PC-9 (cell line): ENCODE measurements at regions of chr16 and their contacts with region 1.

Region 1: GRCh38 chr16:74438492-74439041 is 17.3 kb upstream of the CLEC18B start:
- DNase-seq: no peak
- H3K4me3 ChIP-seq: no peak overlapping the region
- H3K27ac ChIP-seq: no peak overlapping the region
- H3K4me1 ChIP-seq: no peaks in the 10 kb centered on the region
- H3K27me3 ChIP-seq: no peaks in the 10 kb centered on the region
- CTCF ChIP-seq: no peak

Region 2: DNA sequence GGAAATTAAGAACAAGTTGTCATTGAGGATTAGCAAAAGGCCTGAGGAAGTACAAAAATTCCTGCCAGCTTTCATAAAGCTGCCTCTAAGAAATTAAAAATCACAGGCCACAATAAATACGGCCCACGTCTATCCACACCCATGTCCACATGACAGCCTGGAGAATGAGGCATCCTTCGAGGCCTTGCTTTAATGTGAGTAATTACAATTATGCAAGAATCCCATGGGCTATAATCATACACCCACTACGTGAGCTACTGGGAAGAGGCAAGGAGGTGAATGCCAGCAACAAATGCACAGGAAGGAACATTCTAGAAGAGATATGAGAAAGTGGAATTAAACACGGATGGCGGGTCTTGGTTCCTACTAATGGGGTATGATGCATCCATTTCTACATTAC is 1325.2 kb before region 1 on chr16:
- CTCF ChIA-PET with region 1: interaction called, 12 read pairs
- POLR2A ChIA-PET with region 1: no interaction called
- intact Hi-C with region 1: no loop called
- DNase-seq: no peak
- H3K4me3 ChIP-seq: no peak overlapping the region
- H3K27ac ChIP-seq: no peak overlapping the region
- H3K4me1 ChIP-seq: no peaks in the 10 kb centered on the region
- H3K27me3 ChIP-seq: no peaks in the 10 kb centered on the region
- CTCF ChIP-seq: no peak

Region 3: GRCh38 chr16:74309789-74310781 is 128.5 kb before region 1 on chr16:
- CTCF ChIA-PET with region 1: no interaction called
- POLR2A ChIA-PET with region 1: no interaction called
- intact Hi-C with region 1: loop called (anchors 10 kb)
- DNase-seq: peak; percentile 21 to 53
- H3K4me3 ChIP-seq: no peak overlapping the region
- H3K27ac ChIP-seq: no peak overlapping the region
- H3K4me1 ChIP-seq: no peaks in the 10 kb centered on the region
- H3K27me3 ChIP-seq: no peaks in the 10 kb centered on the region
- CTCF ChIP-seq: peak; percentile 76